Calu3 (cell line): ENCODE measurements at regions of chr16 and their contacts with region 1.

Region 1: GRCh38 chr16:3825103-3825502 is 55.4 kb downstream of the CREBBP start:
- DNase-seq: peak; percentile 19
- H3K4me3 Mint-ChIP-seq: no peak overlapping the region
- H3K27ac Mint-ChIP-seq: no peak overlapping the region
- H3K4me1 Mint-ChIP-seq: peaks cover 55% of the 10 kb centered on the region
- H3K27me3 Mint-ChIP-seq: no peaks in the 10 kb centered on the region
- CTCF ChIP-seq: no peak

Region 2: GRCh38 chr16:3873482-3874173 is 48.5 kb after region 1 on chr16:
- CTCF ChIA-PET with region 1: no interaction called
- intact Hi-C with region 1: loop called (anchors 5 kb)
- DNase-seq: no peak
- H3K4me3 Mint-ChIP-seq: no peak overlapping the region
- H3K27ac Mint-ChIP-seq: no peak overlapping the region
- H3K4me1 Mint-ChIP-seq: peaks cover 55% of the 10 kb centered on the region
- H3K27me3 Mint-ChIP-seq: no peaks in the 10 kb centered on the region
- CTCF ChIP-seq: no peak